ENCODE measurements at regions of chr12 and their contacts with region 1.

Region 1: DNA sequence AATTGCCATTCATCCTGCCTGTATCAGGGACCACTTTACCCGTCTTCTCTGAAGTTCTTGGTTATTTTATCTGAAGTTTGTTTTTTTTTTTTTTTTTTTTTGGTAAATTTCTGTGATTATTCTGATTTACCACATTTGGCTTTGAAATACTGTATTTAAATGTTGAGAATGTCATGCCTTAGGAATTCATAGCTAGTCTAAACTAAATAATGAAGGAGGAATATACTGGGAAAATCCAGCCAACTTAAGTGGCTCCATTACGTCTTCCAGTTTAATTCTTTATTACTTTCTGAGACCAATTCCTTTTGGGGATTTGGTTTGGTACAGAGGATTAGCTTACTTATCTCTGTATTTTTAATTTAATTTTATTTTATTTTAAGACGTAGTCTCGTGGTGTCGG is 60.3 kb upstream of the KCNMB4 start:
- DNase-seq: no peak
- ATAC-seq: no peak
- H3K4me3 ChIP-seq: no peak overlapping the region
- H3K4me3 Mint-ChIP-seq: no peak overlapping the region
- H3K27ac ChIP-seq: no peak overlapping the region
- H3K27ac Mint-ChIP-seq: peak overlapping the region; percentile 54 to 71
- H3K4me1 ChIP-seq: peaks cover 11% of the 10 kb centered on the region
- H3K4me1 Mint-ChIP-seq: peaks cover 49 to 53% of the 10 kb centered on the region in 2 donors
- H3K27me3 ChIP-seq: no peaks in the 10 kb centered on the region
- H3K27me3 Mint-ChIP-seq: no peaks in the 10 kb centered on the region
- CTCF ChIP-seq: no peak

Region 2: DNA sequence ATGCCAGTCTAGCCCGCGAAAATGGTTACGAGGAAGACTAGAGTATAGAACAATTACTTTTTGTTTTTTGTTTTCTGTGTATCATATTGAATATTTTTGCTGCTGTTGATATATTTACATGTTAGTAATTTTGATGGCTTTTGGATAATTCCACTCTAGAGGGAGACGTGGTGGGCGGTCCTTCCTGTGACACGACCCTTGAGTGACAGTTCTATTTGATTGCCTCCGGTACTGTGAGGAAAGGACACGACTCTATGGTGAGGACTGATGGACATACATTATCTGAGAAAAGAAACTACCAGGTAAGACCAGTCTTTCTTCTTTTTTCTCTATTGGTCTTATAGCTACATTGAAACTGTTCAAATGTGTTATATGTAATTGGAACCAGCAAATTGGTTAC is 27.8 kb before region 1 on chr12:
- intact Hi-C with region 1: no loop called
- DNase-seq: no peak
- ATAC-seq: no peak
- H3K4me3 ChIP-seq: no peak overlapping the region
- H3K4me3 Mint-ChIP-seq: no peak overlapping the region
- H3K27ac ChIP-seq: no peak overlapping the region
- H3K27ac Mint-ChIP-seq: peak overlapping the region; percentile 5 to 56
- H3K4me1 ChIP-seq: no peaks in the 10 kb centered on the region
- H3K4me1 Mint-ChIP-seq: peaks cover 60 to 63% of the 10 kb centered on the region in 2 donors
- H3K27me3 ChIP-seq: no peaks in the 10 kb centered on the region
- H3K27me3 Mint-ChIP-seq: no peaks in the 10 kb centered on the region
- CTCF ChIP-seq: no peak

Region 3: GRCh38 chr12:70327541-70327940 is 21.7 kb after region 1 on chr12:
- intact Hi-C with region 1: no loop called
- DNase-seq: no peak
- ATAC-seq: no peak
- H3K4me3 ChIP-seq: no peak overlapping the region
- H3K4me3 Mint-ChIP-seq: no peak overlapping the region
- H3K27ac ChIP-seq: no peak overlapping the region
- H3K27ac Mint-ChIP-seq: peak overlapping the region in 1 of 2 donors; percentile 16
- H3K4me1 ChIP-seq: no peaks in the 10 kb centered on the region
- H3K4me1 Mint-ChIP-seq: peaks cover 22 to 33% of the 10 kb centered on the region in 2 donors
- H3K27me3 ChIP-seq: no peaks in the 10 kb centered on the region
- H3K27me3 Mint-ChIP-seq: no peaks in the 10 kb centered on the region
- CTCF ChIP-seq: no peak

Region 4: DNA sequence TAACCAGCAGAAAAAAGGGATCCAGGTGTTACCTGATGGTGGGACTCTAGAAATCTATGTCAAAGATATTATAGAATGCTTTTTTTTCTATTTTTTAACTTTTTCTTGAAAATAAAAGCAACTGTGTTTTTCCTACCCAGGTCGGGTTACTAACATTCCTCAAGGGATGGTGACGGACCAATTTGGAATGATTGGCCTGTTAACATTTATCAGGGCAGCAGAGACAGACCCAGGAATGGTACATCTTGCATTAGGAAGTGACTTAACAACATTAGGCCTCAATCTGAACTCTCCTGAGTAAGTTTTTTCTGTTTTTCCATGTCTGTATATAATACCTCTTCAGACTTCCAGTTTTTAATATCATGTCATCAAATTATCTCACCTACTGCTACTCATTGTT is 32.7 kb after region 1 on chr12:
- intact Hi-C with region 1: loop called (anchors 5 kb)
- DNase-seq: no peak
- ATAC-seq: no peak
- H3K4me3 ChIP-seq: no peak overlapping the region
- H3K4me3 Mint-ChIP-seq: no peak overlapping the region
- H3K27ac ChIP-seq: no peak overlapping the region
- H3K27ac Mint-ChIP-seq: no peak overlapping the region
- H3K4me1 ChIP-seq: no peaks in the 10 kb centered on the region
- H3K4me1 Mint-ChIP-seq: peaks cover under 1 to 14% of the 10 kb centered on the region in 2 donors
- H3K27me3 ChIP-seq: no peaks in the 10 kb centered on the region
- H3K27me3 Mint-ChIP-seq: no peaks in the 10 kb centered on the region
- CTCF ChIP-seq: no peak